ENCODE measurements at regions of chr6 and their contacts with region 1.

Region 1: GRCh38 chr6:13500264-13500663 is 12.9 kb upstream of the GFOD1 start:
- DNase-seq: peak; percentile 23
- H3K4me3 ChIP-seq: no peak overlapping the region
- H3K27ac ChIP-seq: no peak overlapping the region
- H3K4me1 ChIP-seq: no peaks in the 10 kb centered on the region
- H3K27me3 ChIP-seq: no peaks in the 10 kb centered on the region
- CTCF ChIP-seq: no peak

Region 2: DNA sequence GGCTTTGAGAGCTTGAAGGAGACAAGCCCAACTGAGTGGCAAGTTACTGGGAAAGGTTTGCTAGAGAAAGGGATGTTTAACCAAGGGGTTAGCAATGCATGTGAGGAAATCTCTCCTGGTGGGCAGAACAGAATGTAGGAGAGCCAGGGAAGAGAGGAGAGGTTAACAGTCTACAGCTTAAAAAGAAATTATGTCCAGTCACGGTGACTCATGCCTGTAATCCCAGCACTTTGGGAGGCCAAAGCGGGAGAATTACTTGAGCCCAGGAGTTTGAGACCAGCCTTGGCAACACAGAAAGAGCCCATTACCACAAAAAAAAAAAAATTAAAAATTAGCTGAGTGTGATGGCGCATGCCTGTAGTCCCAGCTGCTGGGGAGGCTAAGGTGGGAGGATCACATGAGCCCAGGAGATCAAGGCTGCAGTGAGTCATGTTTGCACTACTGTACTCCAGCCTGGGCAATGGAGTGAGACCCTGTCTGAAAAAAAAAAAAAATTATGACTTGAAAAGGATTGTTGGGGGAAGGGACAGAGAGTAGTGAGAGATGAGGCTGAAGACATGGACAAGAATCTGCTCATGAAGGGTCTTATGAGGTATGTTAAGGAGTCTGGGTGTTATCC is 436.9 kb before region 1 on chr6:
- CTCF ChIA-PET with region 1: no interaction called
- POLR2A ChIA-PET with region 1: no interaction called
- intact Hi-C with region 1: no loop called
- DNase-seq: no peak
- H3K4me3 ChIP-seq: no peak overlapping the region
- H3K27ac ChIP-seq: no peak overlapping the region
- H3K4me1 ChIP-seq: no peaks in the 10 kb centered on the region
- H3K27me3 ChIP-seq: no peaks in the 10 kb centered on the region
- CTCF ChIP-seq: no peak

Region 3: DNA sequence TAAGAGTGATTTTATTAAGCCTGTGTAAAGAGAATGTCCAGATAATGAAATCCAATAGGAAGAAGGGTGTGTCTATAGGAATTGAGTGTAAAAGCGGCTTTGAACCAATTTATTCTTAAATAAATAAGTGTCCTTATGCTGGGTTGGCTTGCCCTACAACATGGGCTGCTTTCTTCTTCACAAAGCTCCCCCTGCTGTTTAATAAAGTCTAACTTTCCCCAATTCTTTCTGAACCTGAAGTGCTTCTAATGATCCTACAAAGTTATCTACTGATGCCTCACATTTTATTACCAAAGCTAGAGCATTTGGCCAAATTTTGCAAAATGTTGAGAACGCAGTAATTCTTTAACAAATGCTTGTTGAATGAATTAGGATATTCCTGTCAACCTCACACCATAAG is 37.8 kb after region 1 on chr6:
- CTCF ChIA-PET with region 1: no interaction called
- POLR2A ChIA-PET with region 1: interaction called, 18 read pairs
- intact Hi-C with region 1: no loop called
- DNase-seq: peak; percentile 72
- H3K4me3 ChIP-seq: no peak overlapping the region
- H3K27ac ChIP-seq: no peak overlapping the region
- H3K4me1 ChIP-seq: no peaks in the 10 kb centered on the region
- H3K27me3 ChIP-seq: no peaks in the 10 kb centered on the region
- CTCF ChIP-seq: peak; percentile 57

Region 4: GRCh38 chr6:13838616-13839015 is 338.4 kb after region 1 on chr6:
- CTCF ChIA-PET with region 1: no interaction called
- POLR2A ChIA-PET with region 1: no interaction called
- intact Hi-C with region 1: no loop called
- DNase-seq: no peak
- H3K4me3 ChIP-seq: no peak overlapping the region
- H3K27ac ChIP-seq: no peak overlapping the region
- H3K4me1 ChIP-seq: no peaks in the 10 kb centered on the region
- H3K27me3 ChIP-seq: no peaks in the 10 kb centered on the region
- CTCF ChIP-seq: no peak

Measured in A673 (cell line).